OCI-LY7 (cell line): ENCODE measurements at regions of chr22 and their contacts with region 1.

Region 1: GRCh38 chr22:33697640-33698039 is 222.6 kb downstream of the LARGE1 start:
- DNase-seq: no peak
- H3K4me3 ChIP-seq: no peak overlapping the region
- H3K27ac ChIP-seq: no peak overlapping the region
- H3K4me1 ChIP-seq: no peaks in the 10 kb centered on the region
- CTCF ChIP-seq: no peak

Region 2: DNA sequence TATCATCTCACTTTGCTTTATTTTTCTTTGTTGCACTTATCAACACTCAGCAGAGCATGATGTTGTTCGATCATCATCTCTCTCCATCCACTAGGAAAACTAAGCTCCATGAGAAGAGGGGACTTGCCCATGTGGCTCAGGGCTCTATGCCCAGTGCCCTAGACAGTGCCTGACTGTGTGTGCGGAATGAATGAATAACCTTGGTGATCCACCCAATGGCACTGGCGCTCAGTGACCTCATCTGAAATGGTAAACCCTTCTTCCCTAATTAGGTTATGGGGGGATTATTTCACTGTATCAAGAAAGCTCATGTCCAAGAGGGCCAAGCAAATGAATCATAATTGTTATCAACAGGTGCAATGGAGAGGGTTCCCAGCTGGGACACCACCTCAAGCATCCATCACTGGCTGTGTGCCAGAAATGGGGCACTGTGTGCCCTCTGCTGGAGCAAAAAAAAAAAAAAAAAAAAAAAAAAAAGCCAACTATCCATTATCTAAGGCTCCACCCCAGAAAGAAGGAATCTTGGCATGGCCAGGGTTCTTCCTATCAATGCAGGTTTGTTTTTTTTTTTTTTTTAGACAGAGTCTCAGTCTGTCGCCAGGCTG is 50.0 kb after region 1 on chr22:
- CTCF ChIA-PET with region 1: no interaction called
- POLR2A ChIA-PET with region 1: no interaction called
- intact Hi-C with region 1: loop called (anchors 2 kb)
- DNase-seq: peak; percentile 58
- H3K4me3 ChIP-seq: no peak overlapping the region
- H3K27ac ChIP-seq: no peak overlapping the region
- H3K4me1 ChIP-seq: peaks cover 16% of the 10 kb centered on the region
- CTCF ChIP-seq: peak; percentile 36

Region 3: GRCh38 chr22:34736081-34736480 is 1038.4 kb after region 1 on chr22:
- CTCF ChIA-PET with region 1: no interaction called
- POLR2A ChIA-PET with region 1: no interaction called
- intact Hi-C with region 1: no loop called
- DNase-seq: no peak
- H3K4me3 ChIP-seq: no peak overlapping the region
- H3K27ac ChIP-seq: no peak overlapping the region
- H3K4me1 ChIP-seq: no peaks in the 10 kb centered on the region
- CTCF ChIP-seq: no peak